Panc1 (cell line): ENCODE measurements at regions of chr22 and their contacts with region 1.

Region 1: DNA sequence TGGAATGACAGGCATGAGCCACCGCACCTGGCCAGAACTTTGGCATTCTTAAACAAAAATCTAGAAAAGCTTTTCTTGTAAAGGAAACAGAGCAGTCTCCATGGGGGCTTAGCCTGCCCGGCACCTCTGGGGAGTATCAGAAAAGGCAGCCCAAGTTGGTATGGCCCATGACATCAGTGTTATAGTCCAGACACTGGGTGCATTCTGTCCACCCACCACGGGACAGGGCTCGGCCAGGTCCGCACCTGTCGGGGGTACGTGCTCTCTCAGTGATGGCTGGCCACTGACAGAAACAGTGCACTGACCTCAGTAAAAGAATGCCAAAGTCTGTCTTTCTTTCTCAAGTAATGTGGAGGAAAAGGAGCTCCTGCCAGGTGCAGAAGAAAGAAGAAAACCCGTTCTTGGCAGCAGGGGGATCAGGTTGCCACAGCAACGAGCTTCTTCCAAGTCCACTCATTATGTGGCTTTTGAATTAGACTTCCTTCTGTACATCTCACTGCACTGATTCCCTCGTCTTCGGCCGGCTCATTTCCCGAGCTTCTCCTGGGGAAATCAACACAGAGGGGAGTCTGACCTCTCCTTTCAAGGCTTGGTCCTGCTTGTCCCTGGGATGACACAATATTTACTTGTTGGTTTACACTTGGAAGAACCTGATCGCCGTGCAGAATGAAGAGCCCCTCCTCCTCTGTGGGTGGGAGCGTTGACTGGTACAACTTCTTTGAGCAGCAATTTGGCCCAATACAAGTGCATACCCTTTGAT is 35.1 kb downstream of the MCHR1 start:
- DNase-seq: no peak
- ATAC-seq: peak; percentile 31
- H3K4me3 ChIP-seq: no peak overlapping the region
- H3K27ac ChIP-seq: peak overlapping the region; percentile 61; the same call in 1 of the 2 replicates
- H3K4me1 ChIP-seq: peaks cover 41% of the 10 kb centered on the region
- H3K27me3 ChIP-seq: no peaks in the 10 kb centered on the region
- CTCF ChIP-seq: no peak

Region 2: DNA sequence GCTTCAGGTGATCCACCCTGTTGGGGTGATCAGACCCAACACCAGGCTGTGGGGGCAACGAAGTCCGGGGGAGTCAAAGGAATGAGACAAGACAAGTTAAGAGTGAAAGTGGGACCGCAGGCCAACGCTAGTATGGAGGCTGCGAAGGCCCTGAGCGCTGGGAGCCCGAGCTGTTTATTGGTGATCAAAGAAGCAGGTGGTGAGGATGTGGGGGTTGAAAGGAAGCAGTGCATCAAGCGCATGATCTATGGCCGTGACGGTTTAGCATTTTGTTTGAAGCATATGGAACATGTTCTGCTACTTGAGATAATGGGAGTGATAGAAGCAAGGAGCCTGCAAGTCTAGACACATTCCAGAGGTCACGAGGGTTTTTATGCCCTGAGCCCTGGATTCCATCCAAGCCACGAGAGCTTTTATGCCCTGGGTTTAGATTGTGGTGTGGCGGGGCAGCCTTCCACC is 14.4 kb after region 1 on chr22:
- CTCF ChIA-PET with region 1: no interaction called
- POLR2A ChIA-PET with region 1: interaction called, 10 read pairs
- in situ Hi-C with region 1: no loop called
- intact Hi-C with region 1: no loop called
- DNase-seq: no peak
- ATAC-seq: no peak
- H3K4me3 ChIP-seq: no peak overlapping the region
- H3K27ac ChIP-seq: no peak overlapping the region
- H3K4me1 ChIP-seq: peaks cover 13% of the 10 kb centered on the region
- H3K27me3 ChIP-seq: no peaks in the 10 kb centered on the region
- CTCF ChIP-seq: no peak

Region 3: GRCh38 chr22:40764763-40765441 is 50.5 kb after region 1 on chr22:
- CTCF ChIA-PET with region 1: interaction called, 3 read pairs
- POLR2A ChIA-PET with region 1: interaction called, 3 read pairs
- in situ Hi-C with region 1: loop called (anchors 10 kb)
- intact Hi-C with region 1: no loop called
- DNase-seq: no peak
- ATAC-seq: no peak
- H3K4me3 ChIP-seq: no peak overlapping the region
- H3K27ac ChIP-seq: no peak overlapping the region
- H3K4me1 ChIP-seq: no peaks in the 10 kb centered on the region
- H3K27me3 ChIP-seq: no peaks in the 10 kb centered on the region
- CTCF ChIP-seq: no peak

Region 4: GRCh38 chr22:40791241-40791640 is 76.9 kb after region 1 on chr22:
- CTCF ChIA-PET with region 1: no interaction called
- POLR2A ChIA-PET with region 1: no interaction called
- in situ Hi-C with region 1: no loop called
- intact Hi-C with region 1: no loop called
- DNase-seq: no peak
- ATAC-seq: no peak
- H3K4me3 ChIP-seq: no peak overlapping the region
- H3K27ac ChIP-seq: no peak overlapping the region
- H3K4me1 ChIP-seq: no peaks in the 10 kb centered on the region
- H3K27me3 ChIP-seq: no peaks in the 10 kb centered on the region
- CTCF ChIP-seq: no peak